Lower lobe of right lung (tissue), 2 donors: ENCODE measurements at regions of chr21 and their contacts with region 1.

Region 1: GRCh38 chr21:25970254-25970930 is 200.2 kb downstream of the APP start:
- DNase-seq: no peak
- ATAC-seq: no peak
- H3K4me3 ChIP-seq: no peak overlapping the region
- H3K27ac ChIP-seq: no peak overlapping the region
- H3K4me1 ChIP-seq: peaks cover 17% of the 10 kb centered on the region
- H3K27me3 ChIP-seq: no peaks in the 10 kb centered on the region
- CTCF ChIP-seq: no peak

Region 2: GRCh38 chr21:25772686-25773085 is 197.7 kb before region 1 on chr21:
- intact Hi-C with region 1: no loop called
- DNase-seq: no peak
- ATAC-seq: no peak
- H3K4me3 ChIP-seq: no peak overlapping the region
- H3K27ac ChIP-seq: peak overlapping the region; percentile 61
- H3K4me1 ChIP-seq: no peaks in the 10 kb centered on the region
- H3K27me3 ChIP-seq: no peaks in the 10 kb centered on the region
- CTCF ChIP-seq: no peak

Region 3: DNA sequence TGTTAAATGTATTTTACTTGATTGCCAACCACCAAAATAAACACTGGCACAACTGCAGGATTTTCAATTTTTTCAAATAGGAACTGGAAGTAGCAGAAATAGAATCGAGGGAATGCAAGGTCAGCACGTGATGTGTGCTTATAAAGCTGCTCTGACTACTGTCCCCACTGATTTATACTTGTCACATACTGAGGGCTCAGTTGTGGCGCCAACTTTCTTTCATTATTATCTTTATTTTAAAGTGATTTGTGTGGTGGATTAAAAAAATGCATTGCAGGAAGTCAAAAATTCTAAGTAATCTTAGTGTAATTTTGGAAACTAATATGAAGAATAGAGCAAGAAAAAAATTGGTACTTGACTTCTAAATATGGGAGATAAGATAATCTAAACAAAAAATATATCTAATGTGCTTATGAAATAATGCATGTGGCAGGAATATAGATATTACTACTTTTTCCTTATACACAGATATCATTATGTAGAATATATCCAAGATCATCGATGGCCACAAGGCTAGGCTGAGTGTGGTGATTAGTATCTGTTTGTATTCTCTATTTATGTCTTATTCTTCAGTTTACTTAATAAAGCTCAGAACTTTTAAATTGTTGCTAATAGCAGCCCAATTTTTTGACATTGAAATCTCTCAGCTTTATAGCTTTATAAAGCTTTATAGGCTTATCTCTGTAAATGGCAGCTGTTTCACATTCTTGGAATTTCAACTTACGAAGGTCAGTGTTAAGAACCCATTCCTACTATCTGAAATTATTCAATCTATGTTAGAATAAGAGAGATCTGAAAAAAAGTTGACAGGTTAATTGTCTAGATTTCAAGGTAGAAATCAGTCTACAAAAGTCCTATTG is 1401.0 kb after region 1 on chr21:
- intact Hi-C with region 1: loop called (anchors 10 kb)
- DNase-seq: no peak
- ATAC-seq: no peak
- H3K4me3 ChIP-seq: no peak overlapping the region
- H3K27ac ChIP-seq: no peak overlapping the region
- H3K4me1 ChIP-seq: peaks cover 11% of the 10 kb centered on the region
- H3K27me3 ChIP-seq: no peaks in the 10 kb centered on the region
- CTCF ChIP-seq: no peak